Activated CD4-positive, alpha-beta T cell treated with anti-CD3 and anti-CD28 coated beads for 36 hours (primary cell): ENCODE measurements at regions of chr2 and their contacts with region 1.

Region 1: GRCh38 chr2:119702918-119703401 is 24.0 kb downstream of the TMEM177 start:
- DNase-seq: peak; percentile 82
- ATAC-seq: peak; percentile 81
- H3K4me3 Mint-ChIP-seq: no peak overlapping the region
- H3K27ac Mint-ChIP-seq: no peak overlapping the region
- H3K4me1 Mint-ChIP-seq: peaks cover 21% of the 10 kb centered on the region
- H3K27me3 Mint-ChIP-seq: no peaks in the 10 kb centered on the region

Region 2: DNA sequence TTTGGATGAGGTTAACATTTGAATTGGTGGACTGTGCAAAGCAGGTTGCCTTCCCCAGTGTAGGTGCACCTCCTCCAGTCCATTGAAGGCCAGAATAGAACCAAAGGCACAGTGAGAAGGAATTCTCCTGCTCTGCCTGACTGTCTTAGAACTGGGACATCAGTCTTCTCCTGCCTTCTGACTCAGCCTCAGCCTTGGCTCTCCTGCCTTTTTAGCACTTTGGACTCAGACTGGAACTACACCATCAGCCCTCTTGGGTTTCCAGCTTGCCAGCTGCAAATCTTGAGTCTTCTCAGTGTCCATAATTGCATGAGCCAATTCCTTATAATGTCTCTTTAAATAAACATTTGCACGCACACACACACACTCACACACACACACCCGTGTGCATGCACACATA is 31.9 kb before region 1 on chr2:
- CTCF ChIA-PET with region 1: no interaction called
- POLR2A ChIA-PET with region 1: no interaction called
- intact Hi-C with region 1: no loop called
- DNase-seq: no peak
- ATAC-seq: no peak
- H3K4me3 Mint-ChIP-seq: no peak overlapping the region
- H3K27ac Mint-ChIP-seq: no peak overlapping the region
- H3K4me1 Mint-ChIP-seq: peaks cover 4% of the 10 kb centered on the region
- H3K27me3 Mint-ChIP-seq: no peaks in the 10 kb centered on the region

Region 3: GRCh38 chr2:119753041-119753929 is 50.3 kb after region 1 on chr2:
- CTCF ChIA-PET with region 1: interaction called, 10 read pairs
- POLR2A ChIA-PET with region 1: no interaction called
- intact Hi-C with region 1: loop called in 1 of 2 experiments (anchors 5 kb)
- DNase-seq: peak; percentile 32
- ATAC-seq: peak; percentile 65
- H3K4me3 Mint-ChIP-seq: no peak overlapping the region
- H3K27ac Mint-ChIP-seq: no peak overlapping the region
- H3K4me1 Mint-ChIP-seq: peaks cover 15% of the 10 kb centered on the region
- H3K27me3 Mint-ChIP-seq: no peaks in the 10 kb centered on the region

Region 4: DNA sequence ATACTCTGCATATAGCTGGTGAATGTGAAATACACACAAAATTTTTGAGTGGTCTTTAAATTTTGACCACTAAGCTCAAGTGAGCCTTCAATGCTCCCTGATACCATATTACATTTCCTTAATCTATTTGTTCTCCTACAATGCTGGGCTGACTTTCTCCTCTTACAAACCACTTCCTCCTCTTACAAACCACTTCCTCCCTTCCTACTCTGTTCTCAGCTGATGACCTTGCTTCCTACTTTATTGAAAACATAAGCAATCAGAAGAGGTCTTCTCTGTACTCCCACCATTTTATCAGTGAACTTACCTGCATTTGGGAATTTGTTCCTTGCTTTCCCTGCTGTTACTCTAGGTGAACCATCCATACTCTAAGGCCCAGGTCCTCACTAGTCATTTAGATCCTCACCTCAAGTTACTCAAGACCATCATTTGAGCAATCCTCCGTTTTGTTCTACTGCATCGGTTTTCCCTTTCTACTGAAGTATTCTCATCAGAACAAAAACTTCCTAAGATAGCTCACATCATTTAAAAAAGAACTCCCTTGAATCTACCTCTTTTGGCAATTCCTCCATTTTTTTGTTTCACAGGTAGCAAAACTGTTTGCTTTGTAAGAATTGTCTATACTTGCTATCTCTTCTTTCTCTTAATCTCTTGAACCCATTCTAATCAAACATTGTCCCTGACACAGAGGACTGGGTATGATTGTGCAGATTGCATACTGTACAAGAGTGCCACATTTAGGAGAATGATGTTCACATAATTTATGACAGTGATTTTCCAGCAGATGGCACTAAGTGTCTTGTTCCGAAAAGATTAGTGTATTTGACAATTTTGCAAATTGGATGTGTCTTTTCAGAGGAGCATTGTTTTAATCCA is 406.5 kb after region 1 on chr2:
- CTCF ChIA-PET with region 1: no interaction called
- POLR2A ChIA-PET with region 1: no interaction called
- intact Hi-C with region 1: loop called in 1 of 2 experiments (anchors 2 kb)
- DNase-seq: no peak
- ATAC-seq: peak; percentile 78
- H3K4me3 Mint-ChIP-seq: peak overlapping the region; percentile 3
- H3K27ac Mint-ChIP-seq: peak overlapping the region; percentile 88
- H3K4me1 Mint-ChIP-seq: peaks cover 28% of the 10 kb centered on the region
- H3K27me3 Mint-ChIP-seq: no peaks in the 10 kb centered on the region